ENCODE measurements at regions of chr1 and their contacts with region 1.

Region 1: GRCh38 chr1:109397538-109398342 is at the start of gene SORT1:
- DNase-seq: peak; percentile 90 to 93 (median 92)
- ATAC-seq: peak; percentile 88 to 95 (median 92)
- H3K4me3 ChIP-seq: peak within 1 kb of the TSS; percentile 22 to 78 (median 66)
- H3K27ac ChIP-seq: peak within 1 kb of the TSS; percentile 38 to 95 (median 88)
- H3K4me1 ChIP-seq: peaks cover 15 to 58% (median 45%) of the 10 kb centered on the region in 12 donors
- H3K27me3 ChIP-seq: no peaks in the 10 kb centered on the region
- CTCF ChIP-seq: peak in 3 of 12 donors; percentile 11 to 25 (median 24)
- POLR2A ChIP-seq: peak; percentile 10 to 74
- total RNA-seq, gene SORT1: 75.5 to 346 (median 165) TPM

Region 2: GRCh38 chr1:109131059-109131458 is 266.7 kb before region 1 on chr1:
- intact Hi-C with region 1: no loop called
- DNase-seq: no peak
- ATAC-seq: no peak
- H3K4me3 ChIP-seq: no peak overlapping the region
- H3K27ac ChIP-seq: no peak overlapping the region
- H3K4me1 ChIP-seq: peaks cover 0 to 15% (median 10%) of the 10 kb centered on the region in 12 donors
- H3K27me3 ChIP-seq: no peaks in the 10 kb centered on the region
- CTCF ChIP-seq: no peak
- POLR2A ChIP-seq: no peak

Region 3: DNA sequence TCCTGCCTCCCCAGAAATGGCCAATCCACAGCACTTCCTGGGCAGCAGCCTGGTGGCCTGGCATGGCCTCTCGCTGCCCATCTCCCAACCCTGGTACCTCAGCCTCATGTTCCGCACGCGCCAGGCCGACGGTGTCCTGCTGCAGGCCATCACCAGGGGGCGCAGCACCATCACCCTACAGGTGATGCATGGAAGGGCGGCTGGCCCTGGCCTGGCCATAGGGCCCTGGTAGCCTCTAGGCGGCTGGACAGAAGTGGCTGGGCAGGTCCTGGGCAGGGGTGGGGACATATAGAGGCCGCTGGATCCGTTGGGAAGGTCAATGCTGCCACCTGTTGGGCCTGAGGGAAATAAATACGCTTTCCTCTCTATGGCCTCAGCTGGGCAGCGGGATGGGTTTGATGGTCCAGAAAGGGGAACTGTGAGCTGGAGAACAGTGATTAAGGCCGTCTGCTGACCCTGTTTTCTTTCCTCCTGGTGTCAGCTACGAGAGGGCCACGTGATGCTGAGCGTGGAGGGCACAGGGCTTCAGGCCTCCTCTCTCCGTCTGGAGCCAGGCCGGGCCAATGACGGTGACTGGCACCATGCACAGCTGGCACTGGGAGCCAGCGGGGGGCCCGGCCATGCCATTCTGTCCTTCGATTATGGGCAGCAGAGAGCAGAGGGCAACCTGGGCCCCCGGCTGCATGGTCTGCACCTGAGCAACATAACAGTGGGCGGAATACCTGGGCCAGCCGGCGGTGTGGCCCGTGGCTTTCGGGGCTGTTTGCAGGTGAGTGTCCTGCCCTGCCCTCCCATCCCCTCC is 133.9 kb before region 1 on chr1:
- intact Hi-C with region 1: loop called (anchors 1 to 5 kb)
- DNase-seq: peak; percentile 75 to 89 (median 83)
- ATAC-seq: peak; percentile 80 to 88 (median 87)
- H3K4me3 ChIP-seq: no peak overlapping the region
- H3K27ac ChIP-seq: no peak overlapping the region
- H3K4me1 ChIP-seq: peaks cover 0 to 9% (median 0%) of the 10 kb centered on the region in 12 donors
- H3K27me3 ChIP-seq: no peaks in the 10 kb centered on the region
- CTCF ChIP-seq: peak; percentile 81 to 95 (median 88)
- POLR2A ChIP-seq: no peak

Region 4: DNA sequence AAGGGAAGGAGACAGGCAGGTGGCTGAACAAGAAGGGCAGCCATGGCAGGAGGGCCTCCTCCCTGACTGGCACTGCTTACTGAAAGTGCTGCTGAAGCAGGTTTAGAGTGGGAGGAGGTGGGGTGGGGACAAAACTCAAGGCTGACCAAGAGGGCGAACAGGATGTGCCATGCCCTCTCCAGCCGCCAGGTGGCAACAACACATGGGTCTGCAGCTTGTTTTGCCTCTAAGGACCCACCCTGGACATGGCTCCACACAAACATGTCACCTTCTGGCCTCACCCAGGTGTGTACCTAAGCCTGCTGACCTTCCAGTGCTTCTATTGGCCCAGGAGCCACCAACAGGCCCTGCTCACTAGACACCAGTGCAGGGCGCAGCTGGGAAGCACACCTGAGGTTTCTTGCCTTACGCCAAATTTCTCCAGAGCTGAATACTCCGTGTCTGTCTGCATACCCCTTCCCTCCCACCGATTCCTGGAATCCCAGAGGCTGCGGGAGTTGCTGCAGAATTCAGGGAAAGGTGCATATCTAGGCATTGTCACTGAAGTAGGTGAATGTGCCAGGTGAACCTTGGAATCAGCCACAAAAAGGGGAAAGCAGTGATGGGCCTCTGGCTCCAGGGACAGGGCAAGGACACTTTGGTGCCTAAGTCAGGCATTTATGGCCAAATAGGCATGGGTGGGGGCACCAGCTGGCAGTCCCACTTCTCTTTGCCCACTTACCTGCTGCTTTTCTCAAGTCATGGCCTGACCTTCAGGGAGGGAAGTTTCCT is 120.1 kb before region 1 on chr1:
- intact Hi-C with region 1: loop called (anchors 1 to 2 kb)
- DNase-seq: peak; percentile 71 to 87 (median 76)
- ATAC-seq: peak; percentile 42 to 81 (median 76)
- H3K4me3 ChIP-seq: no peak overlapping the region
- H3K27ac ChIP-seq: no peak overlapping the region
- H3K4me1 ChIP-seq: peaks cover 0 to 24% (median 7%) of the 10 kb centered on the region in 12 donors
- H3K27me3 ChIP-seq: no peaks in the 10 kb centered on the region
- CTCF ChIP-seq: peak; percentile 79 to 93 (median 88)
- POLR2A ChIP-seq: no peak

Region 5: DNA sequence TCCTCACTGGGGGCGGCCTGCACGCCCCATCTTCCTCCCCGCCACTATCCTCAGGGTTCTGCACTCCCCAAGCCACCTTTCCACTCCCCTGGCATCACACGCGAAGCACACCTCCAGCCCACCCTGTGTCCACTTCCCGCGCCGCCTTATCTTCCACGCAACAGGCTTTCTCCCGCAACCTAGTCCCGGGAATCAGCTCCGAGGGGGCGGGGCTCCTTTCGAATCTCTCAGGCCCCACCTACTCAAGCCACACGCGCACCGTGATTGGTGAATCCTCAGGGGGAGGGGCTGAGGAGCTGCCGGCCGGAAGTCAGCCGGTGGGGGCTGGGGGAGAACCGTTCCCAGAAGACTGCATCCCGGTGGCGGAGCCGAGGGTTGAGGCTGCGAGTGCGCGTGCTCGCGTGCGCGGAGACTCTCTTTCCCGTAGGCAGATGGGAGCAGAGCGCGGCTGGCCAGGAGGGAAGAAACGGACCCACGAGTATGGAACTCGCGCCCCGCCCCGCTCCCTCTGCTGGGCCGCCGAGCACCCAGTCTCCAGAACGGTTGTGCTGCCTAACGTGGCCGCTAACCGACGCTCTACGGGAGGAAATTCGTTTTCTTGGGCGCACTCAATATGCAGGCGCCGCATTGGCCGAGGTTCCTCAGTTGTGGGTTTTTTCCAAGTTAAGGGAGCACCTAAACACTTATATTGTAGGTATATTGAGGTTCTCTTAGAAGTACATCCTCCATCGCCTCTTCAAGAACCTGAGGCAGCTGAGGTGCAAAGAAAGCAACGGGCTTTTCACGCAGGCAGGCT is 114.6 kb before region 1 on chr1 and contains the start of gene PSRC1:
- intact Hi-C with region 1: loop called in 2 of 10 experiments (anchors 2 kb)
- DNase-seq: peak; percentile 96 to 98 (median 97)
- ATAC-seq: peak; percentile 99 to 100 (median 100)
- H3K4me3 ChIP-seq: peak within 1 kb of the TSS; percentile 16 to 77 (median 68)
- H3K27ac ChIP-seq: peak within 1 kb of the TSS; percentile 38 to 91 (median 84)
- H3K4me1 ChIP-seq: peaks cover 0 to 30% (median 13%) of the 10 kb centered on the region in 12 donors
- H3K27me3 ChIP-seq: no peaks in the 10 kb centered on the region
- CTCF ChIP-seq: peak; percentile 13 to 74 (median 42)
- POLR2A ChIP-seq: peak in 1 of 2 donors; percentile 74
- total RNA-seq, gene PSRC1: 0.23 to 3.6 (median 0.60) TPM in 8 of 9 donors, not detected in the other

Region 6: DNA sequence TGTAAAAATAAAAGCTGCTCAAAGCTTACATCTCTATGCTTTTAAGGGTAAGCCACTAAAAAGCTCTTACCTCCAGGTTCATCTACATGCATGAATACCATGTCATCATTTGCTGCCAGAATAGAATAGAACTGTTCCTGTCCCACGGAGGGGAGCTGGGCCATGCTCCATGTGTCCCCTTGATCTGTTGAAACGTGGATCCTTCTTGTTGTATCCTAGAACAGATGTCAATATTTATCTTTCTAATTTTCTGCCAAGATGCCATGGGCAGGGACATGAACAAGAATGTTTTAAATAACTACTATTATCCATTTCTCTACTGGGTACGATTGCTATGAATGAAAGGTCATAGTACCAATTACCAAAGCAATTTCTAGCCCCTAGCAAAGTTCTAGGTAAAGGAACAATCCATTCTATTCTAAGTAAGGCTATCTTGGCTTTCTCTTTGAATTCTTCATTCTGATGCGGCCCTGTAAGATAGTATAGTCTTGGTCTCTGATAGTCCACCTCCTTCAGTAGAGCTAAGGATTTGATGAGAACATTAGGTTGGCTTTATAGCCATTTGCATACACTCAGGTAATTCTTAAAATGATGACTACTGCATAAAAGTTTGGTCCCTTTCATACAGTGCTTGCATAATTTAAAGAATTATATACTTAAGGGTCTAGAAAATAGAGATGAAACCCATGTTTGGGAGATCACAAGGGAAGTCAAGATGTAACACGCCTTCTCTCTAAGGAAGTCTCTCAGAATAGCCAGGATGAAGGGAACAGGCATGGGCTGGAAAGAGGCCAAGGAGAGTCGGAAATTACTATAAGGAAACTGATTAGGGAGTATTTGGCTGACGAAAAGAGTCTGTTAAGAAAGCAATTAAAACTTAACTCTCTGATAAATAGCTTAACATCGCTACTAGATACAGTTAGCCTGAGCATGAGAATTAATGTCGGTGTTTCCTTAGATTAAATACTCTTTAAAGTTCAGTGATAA is 55.5 kb before region 1 on chr1:
- intact Hi-C with region 1: loop called in 3 of 10 experiments (anchors 2 to 10 kb)
- DNase-seq: peak in 1 of 5 donors; percentile 15
- ATAC-seq: peak in 1 of 4 donors; percentile 34
- H3K4me3 ChIP-seq: no peak overlapping the region
- H3K27ac ChIP-seq: no peak overlapping the region
- H3K4me1 ChIP-seq: peaks cover 0 to 19% (median 10%) of the 10 kb centered on the region in 12 donors
- H3K27me3 ChIP-seq: no peaks in the 10 kb centered on the region
- CTCF ChIP-seq: no peak
- POLR2A ChIP-seq: no peak

Region 7: DNA sequence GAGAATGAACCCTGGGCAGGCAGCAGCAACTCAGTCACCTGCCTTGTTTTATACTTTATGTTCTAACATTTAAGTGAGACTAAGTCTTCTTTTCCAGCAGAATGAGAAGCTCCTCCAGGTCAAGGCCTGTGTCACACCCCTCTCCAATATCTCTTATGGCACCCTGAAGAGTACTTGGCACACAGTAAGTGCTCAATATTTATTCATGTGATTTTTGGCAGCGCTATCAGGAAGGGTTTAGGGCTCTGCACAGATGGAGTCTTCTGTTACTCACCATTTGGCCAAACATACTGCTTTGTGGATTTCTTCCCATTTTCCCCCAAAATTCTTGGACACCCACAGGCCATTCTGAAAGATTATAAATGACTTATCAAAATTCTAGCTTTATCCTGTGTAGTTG is 47.1 kb before region 1 on chr1:
- intact Hi-C with region 1: loop called in 5 of 10 experiments (anchors 5 to 10 kb)
- DNase-seq: no peak
- ATAC-seq: no peak
- H3K4me3 ChIP-seq: no peak overlapping the region
- H3K27ac ChIP-seq: no peak overlapping the region
- H3K4me1 ChIP-seq: peaks cover 0 to 9% (median 0%) of the 10 kb centered on the region in 12 donors
- H3K27me3 ChIP-seq: no peaks in the 10 kb centered on the region
- CTCF ChIP-seq: no peak
- POLR2A ChIP-seq: no peak

Region 8: DNA sequence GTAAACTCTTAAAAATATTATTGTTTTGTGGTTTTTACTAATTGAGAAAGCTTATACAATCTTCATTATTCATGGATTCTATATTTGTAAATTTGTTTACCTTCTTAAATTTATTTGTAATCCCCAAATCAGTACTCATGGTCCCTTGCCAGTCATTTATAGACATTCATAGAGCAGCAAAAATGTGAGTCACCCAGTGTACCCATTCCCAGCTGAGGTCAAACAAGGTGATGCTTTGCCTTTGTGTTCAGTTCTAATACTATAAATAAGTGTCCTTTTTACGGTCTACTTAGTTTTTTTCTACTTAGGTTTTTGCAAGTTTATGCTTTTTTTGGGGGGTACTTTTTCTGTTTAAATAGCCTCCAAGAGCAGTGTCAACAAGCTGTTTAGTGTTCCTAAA is 36.1 kb before region 1 on chr1:
- intact Hi-C with region 1: loop called in 5 of 10 experiments (anchors 2 to 5 kb)
- DNase-seq: no peak
- ATAC-seq: peak in 1 of 4 donors; percentile 75
- H3K4me3 ChIP-seq: no peak overlapping the region
- H3K27ac ChIP-seq: peak overlapping the region in 2 of 12 donors; percentile 0 to 47
- H3K4me1 ChIP-seq: peaks cover 0 to 33% (median 20%) of the 10 kb centered on the region in 12 donors
- H3K27me3 ChIP-seq: no peaks in the 10 kb centered on the region
- CTCF ChIP-seq: no peak
- POLR2A ChIP-seq: no peak

Measured in heart left ventricle (tissue), 16 donors.